Activated CD4-positive, alpha-beta memory T cell treated with anti-CD3 and anti-CD28 coated beads, Interleukin-2, amount 10 ng/mL, durations not matched to agents 7 days and 5 days (primary cell): ENCODE measurements at regions of chr7 and their contacts with region 1.

Region 1: DNA sequence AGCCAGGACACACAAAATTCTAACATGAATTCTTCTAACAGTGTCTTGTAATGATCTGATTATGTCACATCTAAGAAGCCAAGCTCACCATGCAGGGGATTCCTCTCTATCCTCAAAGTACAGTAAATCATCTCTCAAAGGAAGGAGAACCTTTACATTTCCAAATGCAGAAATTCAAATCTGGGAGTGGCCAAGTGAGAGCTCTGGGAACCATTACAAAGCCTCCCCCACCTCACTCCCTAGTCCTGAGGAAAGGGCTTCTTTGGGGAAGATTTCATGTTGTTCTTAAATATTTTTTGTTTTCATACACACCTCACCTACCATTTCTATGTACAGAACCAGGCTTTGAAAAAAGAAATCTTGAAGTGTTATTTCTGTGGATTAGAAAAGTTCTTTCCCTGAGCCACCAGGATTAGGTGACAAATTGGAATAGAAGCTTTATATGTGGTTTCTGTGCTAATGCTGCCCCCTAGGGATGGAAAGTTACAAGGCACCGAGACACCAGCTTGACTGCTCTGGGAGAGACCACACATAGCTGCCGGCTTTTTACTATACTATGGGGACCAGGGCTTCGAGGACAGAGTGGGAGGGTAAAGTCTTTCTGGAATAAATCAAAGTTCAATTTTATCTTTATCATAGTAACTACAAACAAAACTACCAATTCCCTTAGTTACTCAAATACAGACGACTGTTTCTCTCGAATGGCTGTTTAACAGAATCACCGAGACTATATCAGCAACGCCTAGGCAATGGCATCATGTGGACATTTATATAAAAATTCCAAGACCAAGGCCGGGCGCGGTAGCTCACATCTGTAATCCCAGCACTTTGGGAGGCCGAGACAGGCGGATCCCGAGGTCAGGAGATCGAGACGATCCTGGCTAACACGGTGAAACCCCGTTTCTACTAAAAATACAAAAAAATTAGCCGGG is 116.1 kb downstream of the RNF216 start:
- DNase-seq: peak; percentile 71
- H3K4me3 Mint-ChIP-seq: no peak overlapping the region
- H3K27ac Mint-ChIP-seq: no peak overlapping the region
- H3K4me1 Mint-ChIP-seq: peaks cover 14% of the 10 kb centered on the region
- H3K27me3 Mint-ChIP-seq: no peaks in the 10 kb centered on the region

Region 2: DNA sequence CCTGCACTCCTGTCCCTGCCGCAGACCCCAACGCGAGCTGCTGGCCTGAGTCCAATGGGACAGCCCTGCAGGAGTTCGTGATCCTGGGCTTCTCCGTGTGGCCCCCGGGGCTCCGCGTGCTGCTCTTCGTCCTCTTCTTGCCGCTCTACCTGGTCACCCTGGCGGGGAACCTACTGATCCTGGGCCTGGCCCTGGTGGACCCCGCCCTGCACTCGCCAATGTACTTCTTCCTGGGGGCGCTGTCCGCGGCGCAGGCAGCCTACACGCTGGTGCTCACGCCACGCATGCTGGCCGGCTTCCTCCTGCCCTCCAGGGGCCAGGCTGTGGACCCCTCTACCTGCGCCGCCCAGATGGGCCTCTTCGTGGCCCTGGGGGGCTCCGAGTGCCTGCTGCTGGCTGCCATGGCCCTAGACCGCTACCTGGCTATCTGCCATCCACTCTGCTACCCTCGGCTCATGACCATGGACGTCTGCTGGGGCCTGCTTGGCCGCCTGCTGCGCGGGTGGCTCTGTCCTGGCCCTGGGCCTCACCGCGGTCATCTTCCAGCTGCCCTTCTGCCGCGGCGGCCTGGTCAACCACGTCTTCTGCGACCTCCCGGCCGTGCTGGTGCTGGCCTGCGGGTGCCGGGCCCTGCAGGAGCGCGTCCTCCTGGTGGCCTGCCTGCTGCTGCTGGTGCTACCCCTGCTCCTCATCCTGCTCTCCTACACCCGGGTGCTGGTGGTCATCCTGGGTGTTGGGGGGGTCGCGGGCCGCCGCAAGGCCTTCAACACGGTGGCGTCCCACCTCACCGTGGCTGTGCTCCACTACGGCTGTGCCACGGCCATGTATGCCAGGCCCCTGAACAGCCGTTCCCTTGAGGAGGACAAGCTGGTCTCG is 548.0 kb before region 1 on chr7:
- CTCF ChIA-PET with region 1: no interaction called
- POLR2A ChIA-PET with region 1: no interaction called
- DNase-seq: no peak
- H3K4me3 Mint-ChIP-seq: no peak overlapping the region
- H3K27ac Mint-ChIP-seq: no peak overlapping the region
- H3K4me1 Mint-ChIP-seq: no peaks in the 10 kb centered on the region
- H3K27me3 Mint-ChIP-seq: peaks cover 14% of the 10 kb centered on the region

Region 3: GRCh38 chr7:5494683-5495561 is 170.4 kb before region 1 on chr7:
- CTCF ChIA-PET with region 1: interaction called, 75 read pairs
- POLR2A ChIA-PET with region 1: no interaction called
- DNase-seq: peak; percentile 84
- H3K4me3 Mint-ChIP-seq: no peak overlapping the region
- H3K27ac Mint-ChIP-seq: no peak overlapping the region
- H3K4me1 Mint-ChIP-seq: peaks cover 24% of the 10 kb centered on the region
- H3K27me3 Mint-ChIP-seq: no peaks in the 10 kb centered on the region

Region 4: DNA sequence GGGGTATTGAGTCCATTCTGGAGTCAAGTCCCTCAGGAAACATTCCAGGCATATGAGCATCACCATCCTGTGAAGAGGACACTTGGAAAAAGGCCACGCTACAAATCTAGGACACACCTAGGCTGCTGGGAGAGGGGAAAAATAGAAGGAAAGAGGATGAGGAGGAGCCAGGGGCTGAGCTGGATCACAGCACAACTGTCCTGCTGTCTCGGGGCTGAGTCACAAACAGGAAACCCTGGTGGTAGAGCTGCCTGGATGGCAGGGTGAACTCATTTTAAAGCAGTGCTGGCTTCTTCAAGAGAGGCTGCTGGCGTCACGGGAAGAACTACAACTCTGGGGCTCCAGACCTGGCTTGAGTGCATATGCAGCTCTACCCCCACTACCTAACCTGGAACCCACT is 35.4 kb before region 1 on chr7:
- CTCF ChIA-PET with region 1: interaction called, 35 read pairs
- POLR2A ChIA-PET with region 1: interaction called, 4 read pairs
- DNase-seq: peak; percentile 73
- H3K4me3 Mint-ChIP-seq: no peak overlapping the region
- H3K27ac Mint-ChIP-seq: peak overlapping the region; percentile 36
- H3K4me1 Mint-ChIP-seq: peaks cover 29% of the 10 kb centered on the region
- H3K27me3 Mint-ChIP-seq: no peaks in the 10 kb centered on the region

Region 5: GRCh38 chr7:5646852-5647251 is 18.5 kb before region 1 on chr7:
- CTCF ChIA-PET with region 1: interaction called, 15 read pairs
- POLR2A ChIA-PET with region 1: interaction called, 4 read pairs
- DNase-seq: no peak
- H3K4me3 Mint-ChIP-seq: no peak overlapping the region
- H3K27ac Mint-ChIP-seq: no peak overlapping the region
- H3K4me1 Mint-ChIP-seq: peaks cover 35% of the 10 kb centered on the region
- H3K27me3 Mint-ChIP-seq: no peaks in the 10 kb centered on the region

Region 6: GRCh38 chr7:5687936-5688630 is 22.7 kb after region 1 on chr7:
- CTCF ChIA-PET with region 1: interaction called, 10 read pairs
- POLR2A ChIA-PET with region 1: no interaction called
- DNase-seq: no peak
- H3K4me3 Mint-ChIP-seq: no peak overlapping the region
- H3K27ac Mint-ChIP-seq: no peak overlapping the region
- H3K4me1 Mint-ChIP-seq: peaks cover 38% of the 10 kb centered on the region
- H3K27me3 Mint-ChIP-seq: peaks cover 32% of the 10 kb centered on the region

Region 7: GRCh38 chr7:6148724-6149360 is 483.5 kb after region 1 on chr7:
- CTCF ChIA-PET with region 1: no interaction called
- POLR2A ChIA-PET with region 1: no interaction called
- DNase-seq: no peak
- H3K4me3 Mint-ChIP-seq: no peak overlapping the region
- H3K27ac Mint-ChIP-seq: no peak overlapping the region
- H3K4me1 Mint-ChIP-seq: peaks cover 5% of the 10 kb centered on the region
- H3K27me3 Mint-ChIP-seq: no peaks in the 10 kb centered on the region